Transverse colon (tissue), 4 donors: ENCODE measurements at regions of chr18 and their contacts with region 1.

Region 1: DNA sequence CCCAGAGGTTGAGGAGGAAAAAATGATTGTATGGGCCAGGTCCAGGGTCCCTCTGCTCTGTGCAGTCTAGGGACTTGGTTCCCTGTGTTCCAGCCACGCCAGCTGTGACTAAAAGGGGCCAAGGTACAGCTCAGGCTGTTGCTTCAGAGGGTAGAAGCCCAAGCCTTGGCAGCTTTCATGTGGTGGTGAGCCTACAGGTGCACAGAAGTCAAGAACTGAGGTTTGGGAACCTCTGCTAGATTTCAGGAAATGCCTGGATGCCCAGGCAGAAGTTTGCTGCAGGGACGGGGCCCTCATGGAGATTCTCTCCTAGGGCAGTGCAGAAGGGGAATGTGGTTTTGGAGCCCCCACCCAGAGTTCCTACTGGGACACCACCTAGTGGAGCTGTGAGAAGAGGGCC is 10.6 kb upstream of the MBP start:
- DNase-seq: no peak
- H3K4me3 ChIP-seq: no peak overlapping the region
- H3K27ac ChIP-seq: no peak overlapping the region
- H3K4me1 ChIP-seq: no peaks in the 10 kb centered on the region
- H3K27me3 ChIP-seq: no peaks in the 10 kb centered on the region
- CTCF ChIP-seq: no peak
- EP300 ChIP-seq: no peak
- POLR2A ChIP-seq: no peak

Region 2: DNA sequence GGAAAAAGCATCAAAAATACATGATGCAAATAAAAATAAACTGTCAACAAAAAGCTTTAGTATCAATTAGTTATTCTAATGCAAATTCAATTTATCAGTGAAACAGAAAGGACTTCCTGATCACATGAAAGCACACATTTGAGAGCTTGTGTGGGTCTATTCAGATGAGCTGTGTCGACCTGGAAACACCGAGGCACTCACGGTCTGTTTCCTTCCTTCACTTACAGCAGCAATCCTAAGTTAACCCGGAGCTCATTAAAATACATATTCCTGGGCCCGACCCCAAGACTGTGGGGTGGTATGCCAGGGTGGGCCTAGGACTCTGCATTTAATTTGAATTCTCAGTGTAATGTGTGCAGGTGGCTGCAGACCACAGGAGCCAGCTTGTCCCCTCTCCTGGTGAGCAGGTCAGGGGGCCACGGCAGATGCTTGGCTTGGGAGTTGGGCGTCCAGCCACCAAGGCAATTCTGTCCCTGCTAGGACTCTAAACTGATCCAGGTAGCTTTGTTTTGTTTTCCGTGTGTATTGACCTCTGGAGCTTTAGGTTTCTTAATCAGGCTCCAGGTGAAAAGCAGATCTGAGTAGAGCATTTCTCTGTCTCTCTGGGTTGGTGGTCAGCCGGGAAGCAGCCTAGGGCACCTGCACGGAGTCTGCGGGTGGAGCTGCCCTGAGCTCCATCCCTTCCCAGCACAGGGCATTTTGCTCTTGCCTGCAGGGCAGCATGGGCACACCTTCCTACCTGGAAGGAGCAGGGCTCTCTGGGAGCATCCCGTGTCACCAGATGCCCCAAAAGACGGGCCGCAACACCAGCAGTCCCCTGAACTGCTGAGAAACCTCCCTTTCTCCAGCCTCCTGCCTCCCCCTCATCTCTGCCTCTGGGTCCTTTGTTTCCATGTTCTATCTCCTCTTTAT is 19.6 kb before region 1 on chr18:
- in situ Hi-C with region 1: no loop called
- intact Hi-C with region 1: loop called (anchors 1 kb)
- DNase-seq: no peak
- H3K4me3 ChIP-seq: no peak overlapping the region
- H3K27ac ChIP-seq: peak overlapping the region in 3 of 4 donors; percentile 0 to 49 (median 17)
- H3K4me1 ChIP-seq: peaks cover 5 to 65% (median 20%) of the 10 kb centered on the region in 4 donors
- H3K27me3 ChIP-seq: no peaks in the 10 kb centered on the region
- CTCF ChIP-seq: no peak
- EP300 ChIP-seq: no peak
- POLR2A ChIP-seq: no peak